Upper lobe of right lung (tissue), 1 donor: ENCODE measurements at regions of chr7 and their contacts with region 1.

Region 1: DNA sequence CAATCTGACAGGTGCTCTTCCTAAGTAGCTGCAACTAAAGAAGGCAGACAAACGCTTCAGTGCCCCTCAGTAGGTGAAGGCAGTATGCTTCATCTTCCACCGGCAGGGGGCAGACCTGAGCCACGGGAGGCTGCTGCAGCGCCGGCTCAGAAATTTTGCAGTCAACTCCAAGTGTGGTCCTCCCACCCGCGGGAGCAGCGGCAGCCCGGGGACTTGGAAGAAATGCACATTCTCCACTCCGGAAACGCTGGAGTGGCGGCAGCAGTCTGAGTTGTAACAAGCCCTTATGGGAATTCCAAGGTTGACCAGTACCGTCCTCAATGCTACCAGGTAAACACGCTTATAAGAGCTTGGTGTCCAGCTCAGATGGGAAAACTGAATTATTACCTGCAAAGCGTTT is 3.4 kb downstream of the IGFBP3 start:
- DNase-seq: peak; percentile 87
- ATAC-seq: peak; percentile 70
- H3K4me3 ChIP-seq: no peak overlapping the region
- H3K27ac ChIP-seq: no peak overlapping the region
- H3K4me1 ChIP-seq: peaks cover 15% of the 10 kb centered on the region
- H3K27me3 ChIP-seq: peaks cover 54% of the 10 kb centered on the region
- CTCF ChIP-seq: peak; percentile 94

Region 2: GRCh38 chr7:45663167-45663921 is 254.3 kb before region 1 on chr7:
- intact Hi-C with region 1: no loop called
- DNase-seq: no peak
- ATAC-seq: peak; percentile 74
- H3K4me3 ChIP-seq: no peak overlapping the region
- H3K27ac ChIP-seq: no peak overlapping the region
- H3K4me1 ChIP-seq: no peaks in the 10 kb centered on the region
- H3K27me3 ChIP-seq: no peaks in the 10 kb centered on the region
- CTCF ChIP-seq: peak; percentile 73

Region 3: GRCh38 chr7:46352004-46352954 is 434.6 kb after region 1 on chr7:
- intact Hi-C with region 1: loop called (anchors 10 kb)
- DNase-seq: no peak
- ATAC-seq: peak; percentile 68
- H3K4me3 ChIP-seq: no peak overlapping the region
- H3K27ac ChIP-seq: no peak overlapping the region
- H3K4me1 ChIP-seq: no peaks in the 10 kb centered on the region
- H3K27me3 ChIP-seq: no peaks in the 10 kb centered on the region
- CTCF ChIP-seq: peak; percentile 59

Region 4: GRCh38 chr7:47091141-47091540 is 1173.5 kb after region 1 on chr7:
- intact Hi-C with region 1: loop called (anchors 10 kb)
- DNase-seq: no peak
- ATAC-seq: no peak
- H3K4me3 ChIP-seq: no peak overlapping the region
- H3K27ac ChIP-seq: no peak overlapping the region
- H3K4me1 ChIP-seq: no peaks in the 10 kb centered on the region
- H3K27me3 ChIP-seq: no peaks in the 10 kb centered on the region
- CTCF ChIP-seq: no peak